B cell (primary cell): ENCODE measurements at regions of chr1 and their contacts with region 1.

Region 1: GRCh38 chr1:101247404-101248287 is 10.8 kb downstream of the S1PR1 start:
- DNase-seq: peak; percentile 89
- ATAC-seq: peak; percentile 87
- H3K4me3 ChIP-seq: peak overlapping the region in 4 of 5 experiments; percentile 8 to 58 (median 10)
- H3K4me3 Mint-ChIP-seq: peak overlapping the region; percentile 79
- H3K27ac ChIP-seq: peak overlapping the region; percentile 83 to 85
- H3K27ac Mint-ChIP-seq: peak overlapping the region; percentile 95
- H3K4me1 ChIP-seq: peaks cover 77 to 78% of the 10 kb centered on the region in 2 donors
- H3K4me1 Mint-ChIP-seq: peaks cover 79% of the 10 kb centered on the region
- H3K27me3 ChIP-seq: no peaks in the 10 kb centered on the region
- H3K27me3 Mint-ChIP-seq: no peaks in the 10 kb centered on the region
- CTCF ChIP-seq: no peak

Region 2: GRCh38 chr1:101025657-101026504 is 221.8 kb before region 1 on chr1 and contains the start of gene DPH5:
- CTCF ChIA-PET with region 1: interaction called, 5 read pairs
- POLR2A ChIA-PET with region 1: interaction called, 10 read pairs
- intact Hi-C with region 1: no loop called
- DNase-seq: peak; percentile 90
- ATAC-seq: peak; percentile 96
- H3K4me3 ChIP-seq: peak within 1 kb of the TSS; percentile 81 to 97 (median 92)
- H3K4me3 Mint-ChIP-seq: peak within 1 kb of the TSS; percentile 98
- H3K27ac ChIP-seq: peak within 1 kb of the TSS; percentile 78 to 85
- H3K27ac Mint-ChIP-seq: peak within 1 kb of the TSS; percentile 97
- H3K4me1 ChIP-seq: peaks cover 45 to 47% of the 10 kb centered on the region in 2 donors
- H3K4me1 Mint-ChIP-seq: peaks cover 50% of the 10 kb centered on the region
- H3K27me3 ChIP-seq: no peaks in the 10 kb centered on the region
- H3K27me3 Mint-ChIP-seq: no peaks in the 10 kb centered on the region
- CTCF ChIP-seq: no peak
- total RNA-seq, gene DPH5: 39.4 and 42.5 TPM in 2 replicates

Region 3: DNA sequence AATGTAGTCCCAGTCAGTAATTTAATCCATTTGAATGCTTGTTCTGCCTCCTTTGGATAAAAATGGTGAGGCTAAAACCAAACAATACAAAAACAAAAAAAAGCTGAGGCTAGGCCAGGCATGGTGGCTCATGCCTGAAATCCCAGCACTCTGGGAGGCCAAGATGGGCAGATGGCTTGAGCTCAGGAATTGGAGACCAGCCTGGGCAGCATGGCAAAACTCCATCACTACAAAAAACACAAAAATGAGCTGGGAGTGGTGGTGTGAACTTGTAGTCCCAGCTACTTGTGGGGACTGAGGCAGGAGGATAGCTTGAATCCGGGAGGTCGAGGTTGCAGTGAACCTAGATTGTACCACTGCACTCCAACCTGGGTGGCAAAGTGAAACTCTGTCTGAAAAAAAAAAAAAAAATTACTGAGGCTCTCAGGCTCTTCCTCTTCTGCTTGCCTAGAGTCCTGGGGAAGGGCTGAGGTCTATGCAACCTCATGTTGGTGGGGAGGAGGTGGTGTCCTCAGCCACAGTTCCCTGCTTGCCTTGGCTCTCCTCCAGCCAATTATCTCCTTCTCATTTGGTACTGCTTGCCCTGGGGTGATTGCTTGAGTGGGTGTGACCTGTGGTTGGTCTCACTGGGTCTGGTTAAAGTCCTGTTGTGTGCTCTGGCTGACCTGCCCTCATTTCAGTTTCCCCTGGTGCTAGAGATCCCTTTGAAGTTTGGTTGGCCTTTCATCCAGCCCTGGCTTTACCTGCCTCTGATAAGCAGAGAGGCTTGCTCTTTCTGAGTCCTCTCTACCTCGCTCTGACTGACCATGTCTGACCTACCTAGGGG is 10.1 kb after region 1 on chr1:
- CTCF ChIA-PET with region 1: interaction called, 4 read pairs
- POLR2A ChIA-PET with region 1: interaction called, 7 read pairs
- intact Hi-C with region 1: loop called (anchors 1 kb)
- DNase-seq: peak; percentile 57
- ATAC-seq: peak; percentile 74
- H3K4me3 ChIP-seq: no peak overlapping the region
- H3K4me3 Mint-ChIP-seq: peak overlapping the region; percentile 32
- H3K27ac ChIP-seq: peak overlapping the region in 1 of 2 donors; percentile 20
- H3K27ac Mint-ChIP-seq: peak overlapping the region; percentile 59
- H3K4me1 ChIP-seq: peaks cover 27 to 32% of the 10 kb centered on the region in 2 donors
- H3K4me1 Mint-ChIP-seq: peaks cover 46% of the 10 kb centered on the region
- H3K27me3 ChIP-seq: no peaks in the 10 kb centered on the region
- H3K27me3 Mint-ChIP-seq: no peaks in the 10 kb centered on the region
- CTCF ChIP-seq: no peak

Region 4: DNA sequence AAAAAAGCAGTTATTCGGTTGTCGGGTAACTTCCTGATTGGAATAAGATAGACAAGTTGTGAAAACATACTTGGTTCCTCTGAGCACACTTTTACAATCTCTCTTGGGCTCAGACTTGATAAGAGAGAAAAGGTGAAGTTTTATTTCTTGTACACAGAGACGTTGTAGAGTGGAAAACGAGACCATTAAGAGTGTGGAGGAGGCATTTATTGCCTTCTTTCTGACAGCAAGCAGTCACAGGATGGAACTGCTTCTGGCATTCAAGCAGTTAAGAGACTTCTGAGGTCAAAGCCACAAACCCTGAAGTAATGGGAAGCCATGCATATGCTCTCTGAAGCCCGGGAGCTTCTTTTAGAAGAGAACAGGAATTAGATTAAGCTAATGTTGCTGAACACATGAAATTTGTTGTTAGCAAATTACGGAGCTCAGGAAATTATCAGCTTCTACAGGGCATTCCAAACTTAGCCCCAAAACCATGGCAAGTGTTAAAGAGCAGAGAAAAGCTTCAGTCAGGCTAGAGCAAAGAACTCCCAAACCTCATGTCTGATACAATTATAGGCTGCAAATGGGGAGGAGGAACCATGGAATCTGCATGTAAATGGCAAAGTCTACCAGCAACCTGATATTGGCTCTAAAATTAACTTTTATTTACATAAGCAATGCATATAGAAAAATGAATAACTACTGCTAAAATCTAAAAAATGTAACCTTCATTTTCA is 15.1 kb after region 1 on chr1:
- CTCF ChIA-PET with region 1: interaction called, 5 read pairs
- POLR2A ChIA-PET with region 1: interaction called, 7 read pairs
- intact Hi-C with region 1: loop called (anchors 1 kb)
- DNase-seq: peak; percentile 49
- ATAC-seq: peak; percentile 37
- H3K4me3 ChIP-seq: peak overlapping the region in 1 of 5 experiments; percentile 19
- H3K4me3 Mint-ChIP-seq: peak overlapping the region; percentile 60
- H3K27ac ChIP-seq: peak overlapping the region in 1 of 2 donors; percentile 45
- H3K27ac Mint-ChIP-seq: peak overlapping the region; percentile 16
- H3K4me1 ChIP-seq: peaks cover 44 to 48% of the 10 kb centered on the region in 2 donors
- H3K4me1 Mint-ChIP-seq: peaks cover 57% of the 10 kb centered on the region
- H3K27me3 ChIP-seq: no peaks in the 10 kb centered on the region
- H3K27me3 Mint-ChIP-seq: no peaks in the 10 kb centered on the region
- CTCF ChIP-seq: no peak